ENCODE measurements at regions of chr3 and their contacts with region 1.

Region 1: GRCh38 chr3:15440891-15441290 is 13.5 kb downstream of the EAF1 start:
- DNase-seq: no peak
- H3K4me3 ChIP-seq: no peak overlapping the region
- H3K27ac ChIP-seq: no peak overlapping the region
- H3K4me1 ChIP-seq: no peaks in the 10 kb centered on the region
- H3K27me3 ChIP-seq: no peaks in the 10 kb centered on the region
- CTCF ChIP-seq: no peak

Region 2: DNA sequence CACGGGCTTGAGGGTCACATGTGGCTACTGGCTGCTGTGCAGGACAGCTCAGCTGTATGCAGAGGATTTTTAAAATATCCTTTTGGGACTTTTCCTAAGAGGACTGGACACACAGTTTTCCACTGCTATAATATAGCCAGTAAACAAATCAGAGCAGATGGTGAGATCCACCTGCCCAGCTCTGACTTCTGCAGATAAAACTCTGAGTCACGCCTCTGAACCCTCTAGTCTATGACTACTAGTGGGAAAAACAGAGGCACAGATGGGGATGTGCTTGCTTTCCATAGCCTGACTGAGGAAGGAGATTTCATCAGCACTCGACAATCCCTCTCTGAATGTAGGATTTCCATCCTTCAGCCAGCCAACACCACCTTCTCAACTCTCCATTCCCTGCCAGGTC is 35.5 kb after region 1 on chr3:
- CTCF ChIA-PET with region 1: no interaction called
- POLR2A ChIA-PET with region 1: interaction called, 18 read pairs
- intact Hi-C with region 1: no loop called
- DNase-seq: no peak
- H3K4me3 ChIP-seq: no peak overlapping the region
- H3K27ac ChIP-seq: no peak overlapping the region
- H3K4me1 ChIP-seq: no peaks in the 10 kb centered on the region
- H3K27me3 ChIP-seq: 0 out of 2 replicates have a peak, but pooled peaks cover 3% of the 10 kb centered on the region
- CTCF ChIP-seq: no peak

Measured in PC-9 (cell line).